H1 (cell line): ENCODE measurements at regions of chr16 and their contacts with region 1.

Region 1: DNA sequence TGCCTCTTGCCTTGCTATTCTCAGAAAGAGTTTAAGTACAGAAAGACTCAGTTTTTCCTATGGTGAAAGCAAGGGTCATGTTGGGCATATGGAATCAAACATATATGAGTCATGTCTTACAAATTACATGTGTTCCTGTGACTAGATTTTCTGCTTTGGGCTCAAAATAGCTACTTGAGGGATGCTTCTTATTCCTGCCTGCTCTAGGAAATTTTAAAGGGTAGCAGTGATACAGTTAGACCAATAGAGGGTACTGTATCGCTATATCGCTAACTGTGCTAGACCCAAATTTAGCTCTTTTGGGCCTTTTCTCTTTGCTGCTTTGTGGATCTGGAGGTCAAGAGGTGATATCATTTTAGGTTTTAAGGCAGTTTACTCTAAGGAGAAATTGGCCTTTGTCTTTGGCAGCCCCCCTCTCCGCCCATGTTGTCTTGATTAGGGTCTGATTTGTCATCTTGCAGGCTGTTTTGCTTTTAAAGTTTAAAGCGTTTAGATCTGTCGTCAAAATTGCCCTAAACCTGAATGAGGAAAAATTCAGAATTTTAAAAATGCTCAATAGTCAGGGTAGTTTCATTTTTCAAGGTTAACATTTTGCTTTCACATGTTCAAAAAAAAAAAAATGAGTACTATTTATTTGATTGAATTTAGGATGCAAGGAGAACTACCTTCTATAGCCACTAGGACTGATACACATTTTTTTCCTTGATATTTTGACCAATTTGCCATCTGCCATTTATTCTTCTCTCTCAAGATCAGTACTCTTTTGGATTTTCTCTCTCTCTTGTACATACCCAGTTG is 8.8 kb downstream of the NFATC3 start:
- DNase-seq: no peak
- H3K4me3 ChIP-seq: no peak overlapping the region
- H3K27ac ChIP-seq: no peak overlapping the region
- H3K4me1 ChIP-seq: peaks cover 2 to 12% (median 3%) of the 10 kb centered on the region in 4 experiments; a peak in 5 of 7 replicates
- H3K27me3 ChIP-seq: no peaks in the 10 kb centered on the region
- CTCF ChIP-seq: peak in 2 of 3 experiments; percentile 54 to 70; a peak in 3 of 4 replicates
- EP300 ChIP-seq: no peak
- POLR2A ChIP-seq: no peak
- RAD21 ChIP-seq: peak; percentile 55 to 72

Region 2: GRCh38 chr16:68013440-68013839 is 80.6 kb before region 1 on chr16:
- CTCF ChIA-PET with region 1: no interaction called
- POLR2A ChIA-PET with region 1: no interaction called
- DNase-seq: no peak
- H3K4me3 ChIP-seq: no peak overlapping the region
- H3K27ac ChIP-seq: no peak overlapping the region
- H3K4me1 ChIP-seq: peaks cover 0 to 6% (median 3%) of the 10 kb centered on the region in 4 experiments; a peak in 3 of 7 replicates
- H3K27me3 ChIP-seq: no peaks in the 10 kb centered on the region
- CTCF ChIP-seq: no peak
- EP300 ChIP-seq: no peak
- POLR2A ChIP-seq: no peak
- RAD21 ChIP-seq: no peak

Region 3: GRCh38 chr16:68105611-68106010 is 11.6 kb after region 1 on chr16:
- CTCF ChIA-PET with region 1: interaction called, 15 read pairs
- POLR2A ChIA-PET with region 1: no interaction called
- DNase-seq: no peak
- H3K4me3 ChIP-seq: no peak overlapping the region
- H3K27ac ChIP-seq: no peak overlapping the region
- H3K4me1 ChIP-seq: no peaks in the 10 kb centered on the region
- H3K27me3 ChIP-seq: no peaks in the 10 kb centered on the region
- CTCF ChIP-seq: no peak
- EP300 ChIP-seq: no peak
- POLR2A ChIP-seq: no peak
- RAD21 ChIP-seq: no peak

Region 4: DNA sequence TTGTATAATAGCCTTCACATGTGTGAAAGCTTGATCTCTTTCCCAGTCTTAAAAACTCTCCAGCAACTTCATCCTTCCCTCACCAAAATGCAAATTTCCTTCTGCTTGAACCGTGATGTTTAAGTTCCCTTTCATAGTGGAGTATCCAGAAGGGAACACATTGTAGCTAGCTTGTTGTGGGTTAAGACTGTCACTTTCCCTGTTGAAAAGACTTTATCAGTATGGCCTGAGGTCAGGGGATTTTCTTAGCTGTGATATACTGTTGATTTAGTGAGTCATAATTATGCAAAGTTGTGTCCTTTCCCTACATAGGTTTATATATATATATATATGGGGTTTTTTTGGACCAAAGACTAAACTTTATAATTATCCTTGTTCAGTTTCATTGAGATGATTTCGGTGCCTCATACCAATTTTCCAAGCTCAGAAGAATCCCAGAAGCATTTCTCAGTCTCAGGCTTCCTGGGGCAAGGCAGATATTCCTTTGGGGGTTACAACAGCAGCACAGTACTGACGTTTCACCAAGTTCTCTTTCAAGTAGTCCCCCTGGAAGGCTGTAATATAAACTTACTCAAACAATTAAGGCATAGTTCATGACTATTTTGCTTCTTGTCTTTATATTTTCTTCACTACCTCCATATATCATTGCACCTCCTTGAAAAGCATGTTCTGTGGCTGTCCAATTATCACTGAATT is 106.2 kb after region 1 on chr16:
- CTCF ChIA-PET with region 1: interaction called, 15 read pairs
- POLR2A ChIA-PET with region 1: no interaction called
- DNase-seq: no peak
- H3K4me3 ChIP-seq: no peak overlapping the region
- H3K27ac ChIP-seq: no peak overlapping the region
- H3K4me1 ChIP-seq: no peaks in the 10 kb centered on the region
- H3K27me3 ChIP-seq: no peaks in the 10 kb centered on the region
- CTCF ChIP-seq: no peak
- EP300 ChIP-seq: no peak
- POLR2A ChIP-seq: no peak
- RAD21 ChIP-seq: no peak

Region 5: DNA sequence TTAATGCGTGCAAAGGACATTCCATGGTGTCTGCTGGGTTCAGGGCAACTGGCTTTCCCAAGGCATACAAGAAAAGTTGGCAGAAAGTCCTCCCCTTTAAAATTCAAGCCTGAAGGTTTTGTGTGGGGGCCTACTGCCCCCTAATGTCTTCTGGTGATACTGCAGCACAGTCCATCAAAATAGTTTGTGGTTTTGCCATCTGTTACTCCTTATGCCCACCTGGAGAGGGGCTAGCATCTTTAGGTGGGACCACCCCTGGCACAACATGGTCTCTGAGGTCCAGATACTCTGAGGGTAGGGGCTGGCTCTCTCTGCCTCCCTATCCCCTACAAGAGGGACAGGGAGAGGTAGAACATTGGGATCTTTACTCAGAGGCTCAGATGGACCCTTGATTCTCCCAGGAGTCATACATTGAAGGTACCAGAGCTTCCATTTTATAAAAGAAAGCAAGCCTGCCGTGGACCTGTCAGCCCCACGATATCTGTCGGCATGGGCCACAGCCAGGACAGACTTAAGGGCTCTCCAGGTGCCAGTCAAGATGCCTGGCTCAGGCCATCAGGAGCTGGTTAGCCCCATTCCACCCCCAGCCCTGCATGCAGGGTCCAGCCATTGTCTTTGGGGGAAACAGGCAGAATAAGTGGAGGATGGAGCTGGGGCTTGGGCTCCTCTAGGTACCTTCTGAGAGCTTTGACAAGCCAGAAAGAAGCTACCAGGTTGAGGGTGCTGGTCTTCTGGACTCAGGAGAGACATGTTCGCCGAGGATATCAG is 135.6 kb after region 1 on chr16:
- CTCF ChIA-PET with region 1: interaction called, 68 read pairs
- POLR2A ChIA-PET with region 1: interaction called, 4 read pairs
- DNase-seq: peak in 1 of 2 experiments; percentile 77
- H3K4me3 ChIP-seq: no peak overlapping the region
- H3K27ac ChIP-seq: no peak overlapping the region
- H3K4me1 ChIP-seq: peaks cover 0 to 15% (median 10%) of the 10 kb centered on the region in 4 experiments; a peak in 5 of 7 replicates
- H3K27me3 ChIP-seq: no peaks in the 10 kb centered on the region
- CTCF ChIP-seq: peak; percentile 2 to 87 (median 84)
- EP300 ChIP-seq: no peak
- POLR2A ChIP-seq: no peak
- RAD21 ChIP-seq: peak; percentile 89 to 93

Region 6: GRCh38 chr16:68237243-68238028 is 143.4 kb after region 1 on chr16:
- CTCF ChIA-PET with region 1: interaction called, 13 read pairs
- POLR2A ChIA-PET with region 1: interaction called, 3 read pairs
- DNase-seq: peak; percentile 97 to 99
- H3K4me3 ChIP-seq: peak overlapping the region; percentile 59 to 85 (median 82)
- H3K27ac ChIP-seq: peak overlapping the region; percentile 84
- H3K4me1 ChIP-seq: peaks cover 0 to 28% (median 20%) of the 10 kb centered on the region in 4 experiments; a peak in 5 of 7 replicates
- H3K27me3 ChIP-seq: no peaks in the 10 kb centered on the region
- CTCF ChIP-seq: no peak
- EP300 ChIP-seq: peak in 1 of 2 experiments; percentile 24; a peak in 1 of 3 replicates
- POLR2A ChIP-seq: peak; percentile 71 to 97
- RAD21 ChIP-seq: no peak